ENCODE measurements at regions of chr19 and their contacts with region 1.

Region 1: GRCh38 chr19:41192574-41193429 is at the start of gene CYP2S1:
- DNase-seq: no peak
- H3K4me3 ChIP-seq: peak within 1 kb of the TSS; percentile 34
- H3K27ac ChIP-seq: no peak within 1 kb of the TSS
- H3K4me1 ChIP-seq: peaks cover 7% of the 10 kb centered on the region
- H3K27me3 ChIP-seq: peaks cover 44% of the 10 kb centered on the region
- CTCF ChIP-seq: no peak
- total RNA-seq, gene CYP2S1: 0.19 and 0.24 TPM in 2 replicates

Region 2: GRCh38 chr19:40813182-40813958 is 379.4 kb before region 1 on chr19:
- CTCF ChIA-PET with region 1: no interaction called
- POLR2A ChIA-PET with region 1: interaction called, 11 read pairs
- intact Hi-C with region 1: no loop called
- DNase-seq: peak; percentile 57
- H3K4me3 ChIP-seq: no peak overlapping the region
- H3K27ac ChIP-seq: no peak overlapping the region
- H3K4me1 ChIP-seq: peaks cover 17% of the 10 kb centered on the region
- H3K27me3 ChIP-seq: no peaks in the 10 kb centered on the region
- CTCF ChIP-seq: no peak

Region 3: GRCh38 chr19:41123716-41124294 is 69.0 kb before region 1 on chr19:
- CTCF ChIA-PET with region 1: no interaction called
- POLR2A ChIA-PET with region 1: no interaction called
- intact Hi-C with region 1: no loop called
- DNase-seq: no peak
- H3K4me3 ChIP-seq: no peak overlapping the region
- H3K27ac ChIP-seq: no peak overlapping the region
- H3K4me1 ChIP-seq: no peaks in the 10 kb centered on the region
- H3K27me3 ChIP-seq: no peaks in the 10 kb centered on the region
- CTCF ChIP-seq: no peak